ENCODE measurements at regions of chr10 and their contacts with region 1.

Region 1: GRCh38 chr10:31393844-31394243 is 74.8 kb downstream of the ZEB1 start:
- DNase-seq: no peak
- ATAC-seq: peak; percentile 82
- H3K4me3 ChIP-seq: no peak overlapping the region
- H3K27ac ChIP-seq: peak overlapping the region; percentile 48
- H3K4me1 ChIP-seq: peaks cover 12% of the 10 kb centered on the region; the same call in 1 of the 2 replicates
- H3K27me3 ChIP-seq: no peaks in the 10 kb centered on the region
- CTCF ChIP-seq: no peak
- EP300 ChIP-seq: no peak
- POLR2A ChIP-seq: no peak
- RAD21 ChIP-seq: no peak

Region 2: DNA sequence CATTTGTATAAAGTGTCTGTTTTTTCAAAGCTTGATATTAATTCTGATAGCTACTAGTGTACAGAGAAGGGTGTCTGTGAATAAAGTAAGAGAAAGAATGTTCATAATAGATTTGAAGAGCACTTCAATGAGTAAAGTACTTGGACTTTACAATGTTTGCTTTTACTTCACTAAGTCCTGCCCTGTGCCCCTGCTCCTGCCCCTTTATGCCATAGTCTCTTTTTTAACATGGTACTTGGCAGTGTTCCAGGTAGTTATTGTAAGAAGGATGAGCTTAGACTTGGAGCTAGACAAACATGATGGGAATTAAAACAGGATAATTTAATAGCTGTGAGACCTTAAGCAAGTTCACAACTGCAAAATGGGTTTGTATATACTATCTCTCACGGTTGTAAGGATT is 33.9 kb before region 1 on chr10:
- CTCF ChIA-PET with region 1: no interaction called
- POLR2A ChIA-PET with region 1: interaction called, 3 read pairs
- RAD21 ChIA-PET with region 1: no interaction called
- SMC1A ChIA-PET with region 1: interaction called, 13 read pairs
- in situ Hi-C with region 1: no loop called
- intact Hi-C with region 1: no loop called
- DNase-seq: no peak
- ATAC-seq: no peak
- H3K4me3 ChIP-seq: no peak overlapping the region
- H3K27ac ChIP-seq: no peak overlapping the region
- H3K4me1 ChIP-seq: no peaks in the 10 kb centered on the region
- H3K27me3 ChIP-seq: no peaks in the 10 kb centered on the region
- CTCF ChIP-seq: no peak
- EP300 ChIP-seq: no peak
- POLR2A ChIP-seq: no peak
- RAD21 ChIP-seq: no peak

Measured in GM12878 (cell line).